Common myeloid progenitor, CD34-positive (primary cell): ENCODE measurements at regions of chr20 and their contacts with region 1.

Region 1: DNA sequence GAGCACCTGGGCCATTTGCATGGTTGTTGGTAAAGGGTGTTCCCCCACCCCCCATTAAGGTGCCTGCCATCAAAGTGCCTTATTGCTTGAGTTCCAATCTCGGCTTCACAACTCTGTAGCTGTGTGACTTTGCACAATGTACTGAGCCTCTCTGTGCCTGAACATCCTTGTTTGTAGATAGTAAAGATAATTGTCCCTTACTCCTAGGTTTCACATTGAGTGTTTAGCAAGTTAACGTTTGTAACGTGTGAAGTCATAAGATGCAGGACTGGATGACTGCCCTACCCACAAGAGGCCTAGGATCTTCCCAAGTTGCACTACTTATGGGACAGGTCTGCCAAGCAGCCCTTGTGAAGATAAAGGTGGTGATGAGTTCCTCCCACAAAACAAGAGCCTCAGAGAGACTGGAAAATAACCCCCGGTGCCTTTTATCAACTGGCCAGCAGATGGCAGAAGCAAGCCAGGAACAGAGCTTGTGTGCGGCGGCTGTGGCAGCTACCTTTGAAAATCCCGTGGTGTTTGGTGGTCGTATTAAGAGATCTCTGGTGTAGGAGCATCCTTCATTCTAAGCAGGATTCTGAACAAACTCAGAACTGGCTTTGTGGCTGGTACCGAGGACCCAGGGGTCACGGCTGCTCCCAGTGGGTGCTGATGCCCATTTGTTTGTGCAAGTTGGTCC is 99.0 kb downstream of the CDH26 start:
- DNase-seq: peak; percentile 83 to 91 (median 91)
- H3K4me3 ChIP-seq: peak overlapping the region in 2 of 7 experiments; percentile 43 to 80
- H3K27ac ChIP-seq: peak overlapping the region; percentile 73 to 82
- H3K4me1 ChIP-seq: peaks cover 18 to 87% (median 58%) of the 10 kb centered on the region in 4 experiments
- H3K27me3 ChIP-seq: no peaks in the 10 kb centered on the region

Region 2: DNA sequence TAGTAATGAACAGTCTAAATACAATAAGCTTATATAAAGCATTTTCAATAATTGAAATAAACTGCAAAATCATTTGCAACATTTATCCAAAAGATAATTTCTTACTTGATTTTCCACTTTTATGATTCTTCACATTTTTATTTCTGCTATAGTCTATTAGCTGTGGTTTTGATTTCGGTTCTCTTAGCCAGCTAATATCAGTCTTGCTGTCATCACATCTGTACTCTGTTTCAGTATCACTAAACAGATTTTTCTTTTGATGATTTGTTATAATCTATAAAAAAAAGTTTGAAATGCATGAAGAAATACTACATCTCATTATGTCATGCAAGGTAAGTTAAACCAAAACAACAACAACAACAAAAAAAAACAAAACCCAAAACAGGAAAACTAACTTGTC is 177.1 kb before region 1 on chr20:
- CTCF ChIA-PET with region 1: no interaction called
- POLR2A ChIA-PET with region 1: no interaction called
- DNase-seq: no peak
- H3K4me3 ChIP-seq: no peak overlapping the region
- H3K27ac ChIP-seq: no peak overlapping the region
- H3K4me1 ChIP-seq: no peaks in the 10 kb centered on the region
- H3K27me3 ChIP-seq: no peaks in the 10 kb centered on the region

Region 3: GRCh38 chr20:60046011-60046413 is 11.2 kb before region 1 on chr20:
- CTCF ChIA-PET with region 1: interaction called, 24 read pairs
- POLR2A ChIA-PET with region 1: no interaction called
- DNase-seq: peak in 2 of 3 donors; percentile 70 to 76
- H3K4me3 ChIP-seq: peak overlapping the region in 2 of 7 experiments; percentile 17
- H3K27ac ChIP-seq: peak overlapping the region; percentile 55 to 64
- H3K4me1 ChIP-seq: peaks cover 9 to 49% (median 31%) of the 10 kb centered on the region in 4 experiments
- H3K27me3 ChIP-seq: no peaks in the 10 kb centered on the region

Region 4: DNA sequence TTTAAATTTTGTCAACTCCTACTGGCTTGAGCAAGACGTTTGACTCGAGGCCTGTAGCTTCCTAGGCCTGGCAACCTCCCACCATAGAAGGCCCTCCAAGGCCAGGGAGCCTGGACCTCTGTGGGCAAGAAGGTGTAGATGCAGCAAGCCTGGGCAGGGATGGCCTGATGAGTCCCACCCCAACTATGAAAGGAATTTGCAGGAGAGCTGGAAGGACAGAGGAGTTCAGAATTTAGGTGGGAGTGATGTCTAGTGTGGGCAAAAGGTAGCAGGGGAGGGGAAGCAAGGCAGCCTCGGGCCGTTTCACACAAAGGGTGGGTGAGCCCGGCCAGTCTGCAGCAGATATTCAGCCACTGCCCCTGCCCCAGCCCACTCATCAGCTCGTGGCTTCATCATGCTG is 146.2 kb after region 1 on chr20:
- CTCF ChIA-PET with region 1: interaction called, 58 read pairs
- POLR2A ChIA-PET with region 1: interaction called, 5 read pairs
- DNase-seq: no peak
- H3K4me3 ChIP-seq: no peak overlapping the region
- H3K27ac ChIP-seq: no peak overlapping the region
- H3K4me1 ChIP-seq: peaks cover 0 to 19% (median under 1%) of the 10 kb centered on the region in 4 experiments
- H3K27me3 ChIP-seq: no peaks in the 10 kb centered on the region

Region 5: DNA sequence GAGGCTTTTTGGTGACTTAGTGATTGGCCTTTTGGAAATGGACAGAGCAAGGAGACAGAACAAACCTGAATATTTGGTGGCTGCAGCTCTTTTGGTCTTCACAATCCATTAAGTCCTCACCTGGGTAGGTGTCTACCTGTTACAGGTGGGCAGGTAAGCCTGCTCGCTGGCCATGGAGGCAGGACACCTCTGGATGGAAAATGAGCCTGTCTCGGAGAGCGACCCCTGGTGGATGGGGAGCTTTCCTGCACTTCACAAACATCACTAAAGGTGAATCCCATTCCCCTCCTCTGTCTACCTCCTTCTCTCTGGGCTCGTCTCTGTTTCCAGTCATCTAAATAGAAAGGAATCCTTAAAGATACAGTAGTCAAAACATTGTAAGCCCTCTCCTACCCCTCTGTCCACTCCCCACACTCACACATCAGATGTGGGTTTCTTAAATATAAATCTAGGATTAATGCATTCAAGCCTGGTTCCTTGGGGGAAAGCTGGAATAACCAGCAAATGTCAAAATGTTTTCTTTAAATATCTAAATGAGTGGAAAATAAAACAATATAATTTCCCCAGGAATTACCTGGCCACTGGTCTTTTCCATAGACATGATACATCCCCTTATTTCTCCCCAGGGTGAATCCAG is 205.8 kb after region 1 on chr20:
- CTCF ChIA-PET with region 1: interaction called, 66 read pairs
- POLR2A ChIA-PET with region 1: no interaction called
- DNase-seq: peak; percentile 36 to 63 (median 57)
- H3K4me3 ChIP-seq: no peak overlapping the region
- H3K27ac ChIP-seq: no peak overlapping the region
- H3K4me1 ChIP-seq: peaks cover 0 to 12% (median 7%) of the 10 kb centered on the region in 4 experiments
- H3K27me3 ChIP-seq: no peaks in the 10 kb centered on the region